Heart right ventricle (tissue), 16 donors: ENCODE measurements at regions of chr12 and their contacts with region 1.

Region 1: GRCh38 chr12:6533923-6534694 is at the start of gene GAPDH:
- DNase-seq: peak; percentile 92 to 93
- ATAC-seq: peak; percentile 71 to 88 (median 84)
- H3K4me3 ChIP-seq: peak within 1 kb of the TSS; percentile 81 to 99 (median 98)
- H3K27ac ChIP-seq: peak within 1 kb of the TSS; percentile 91 to 100 (median 98)
- H3K4me1 ChIP-seq: peaks cover 17 to 62% (median 54%) of the 10 kb centered on the region in 9 donors
- H3K27me3 ChIP-seq: no peaks in the 10 kb centered on the region
- CTCF ChIP-seq: peak in 1 of 9 donors; percentile 9
- total RNA-seq, gene GAPDH: 4,081 to 7,888 (median 4,666) TPM

Region 2: DNA sequence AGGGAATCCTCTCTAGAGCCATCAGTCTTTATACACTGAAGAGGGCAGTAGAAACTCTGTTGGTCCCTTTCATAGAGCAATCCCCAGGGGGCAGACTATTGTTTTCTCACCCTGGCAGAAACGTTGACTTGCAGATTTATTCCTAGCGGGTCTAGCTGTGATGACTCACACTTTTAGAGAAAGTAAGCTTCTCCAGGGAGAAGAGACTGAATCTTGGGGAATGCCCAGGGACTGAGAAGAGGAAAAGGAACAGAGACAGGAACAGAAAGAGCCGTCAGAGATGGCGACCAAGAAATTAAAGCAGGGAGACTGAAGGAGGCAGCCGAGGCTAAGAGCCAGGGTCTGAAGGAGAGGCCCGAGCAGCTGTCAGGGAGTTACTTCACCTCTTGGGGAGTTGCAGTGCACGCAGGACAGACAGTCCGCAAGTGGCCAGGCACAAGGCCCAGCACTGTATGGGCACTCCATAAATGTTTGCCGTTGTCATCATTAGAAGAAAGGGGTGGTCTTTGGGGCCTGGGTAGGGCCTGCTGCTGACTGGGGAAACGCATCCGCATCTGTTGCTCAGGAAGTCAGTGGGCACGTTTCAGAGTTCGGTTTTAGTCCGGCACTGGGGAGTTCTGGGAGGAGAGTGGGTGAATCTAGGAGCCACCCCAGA is 210.6 kb before region 1 on chr12:
- intact Hi-C with region 1: loop called in 1 of 10 experiments (anchors 5 kb)
- DNase-seq: peak in 1 of 2 donors; percentile 85
- ATAC-seq: peak; percentile 41 to 76 (median 64)
- H3K4me3 ChIP-seq: peak overlapping the region in 7 of 10 donors; percentile 3 to 30 (median 25)
- H3K27ac ChIP-seq: peak overlapping the region in 9 of 10 donors; percentile 71 to 88 (median 83)
- H3K4me1 ChIP-seq: peaks cover 20 to 70% (median 65%) of the 10 kb centered on the region in 9 donors
- H3K27me3 ChIP-seq: no peaks in the 10 kb centered on the region
- CTCF ChIP-seq: peak; percentile 6 to 71 (median 54)

Region 3: DNA sequence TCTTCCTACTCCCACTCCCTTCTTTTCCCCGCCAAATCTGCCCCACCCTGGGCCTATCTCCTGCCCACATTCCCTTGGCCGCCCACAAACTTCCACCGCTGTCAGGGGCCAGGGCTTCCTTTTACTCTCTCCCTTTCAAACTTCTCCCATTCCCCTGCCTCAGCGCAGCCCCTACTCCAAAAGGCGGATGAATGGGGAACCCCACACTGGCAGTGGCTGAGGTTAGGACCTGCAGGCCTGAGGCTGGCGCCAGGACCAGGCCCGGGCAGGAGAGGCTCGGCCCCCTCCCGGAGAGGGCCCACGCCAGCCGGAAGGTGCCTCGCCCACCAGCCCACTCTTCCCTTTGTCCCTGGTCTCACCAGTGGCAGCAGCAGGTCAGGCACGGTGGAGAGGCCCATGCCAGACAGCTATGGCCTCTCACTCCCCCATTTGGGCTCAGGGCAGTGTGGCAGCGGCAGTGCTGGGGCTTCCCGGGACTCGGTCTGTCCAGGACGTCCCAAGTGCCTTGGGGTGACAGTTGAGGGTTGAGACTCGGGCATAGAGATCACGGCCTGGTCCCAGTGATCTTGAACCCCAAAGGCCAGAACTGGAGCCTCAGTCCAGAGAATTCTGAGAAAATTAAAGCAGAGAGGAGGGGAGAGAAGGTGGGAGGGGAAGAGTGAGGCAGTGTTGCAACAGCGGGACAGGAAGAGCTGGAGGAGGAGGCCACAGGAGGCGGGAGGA is 192.5 kb before region 1 on chr12 and contains the start of gene TNFRSF1A:
- intact Hi-C with region 1: loop called in 5 of 10 experiments (anchors 5 to 10 kb)
- DNase-seq: peak; percentile 62 to 86
- ATAC-seq: peak; percentile 76 to 87 (median 83)
- H3K4me3 ChIP-seq: peak within 1 kb of the TSS; percentile 68 to 99 (median 92)
- H3K27ac ChIP-seq: peak within 1 kb of the TSS; percentile 91 to 100 (median 98)
- H3K4me1 ChIP-seq: peaks cover 30 to 82% (median 70%) of the 10 kb centered on the region in 9 donors
- H3K27me3 ChIP-seq: no peaks in the 10 kb centered on the region
- CTCF ChIP-seq: no peak
- total RNA-seq, gene TNFRSF1A: 29.4 to 100 (median 39.2) TPM

Region 4: GRCh38 chr12:6451348-6452244 is 82.5 kb before region 1 on chr12 and contains the start of gene TAPBPL:
- intact Hi-C with region 1: loop called in 1 of 10 experiments (anchors 5 kb)
- DNase-seq: peak; percentile 84 to 90
- ATAC-seq: peak; percentile 91 to 96 (median 94)
- H3K4me3 ChIP-seq: peak within 1 kb of the TSS; percentile 56 to 85 (median 68)
- H3K27ac ChIP-seq: peak within 1 kb of the TSS; percentile 92 to 100 (median 98)
- H3K4me1 ChIP-seq: peaks cover 4 to 31% (median 27%) of the 10 kb centered on the region in 9 donors
- H3K27me3 ChIP-seq: no peaks in the 10 kb centered on the region
- CTCF ChIP-seq: no peak
- total RNA-seq, gene TAPBPL: 14.8 to 57.5 (median 17.8) TPM

Region 5: GRCh38 chr12:6493497-6494257 is 40.4 kb before region 1 on chr12 and contains the start of gene NCAPD2:
- intact Hi-C with region 1: loop called in 8 of 10 experiments (anchors 2 to 5 kb)
- DNase-seq: peak; percentile 93 to 94
- ATAC-seq: peak; percentile 95 to 98 (median 96)
- H3K4me3 ChIP-seq: peak within 1 kb of the TSS; percentile 60 to 98 (median 74)
- H3K27ac ChIP-seq: peak within 1 kb of the TSS; percentile 89 to 98 (median 96)
- H3K4me1 ChIP-seq: peaks cover 0 to 30% (median 26%) of the 10 kb centered on the region in 9 donors
- H3K27me3 ChIP-seq: no peaks in the 10 kb centered on the region
- CTCF ChIP-seq: peak in 7 of 9 donors; percentile 27 to 50 (median 35)
- total RNA-seq, gene NCAPD2: 8.4 to 18.8 (median 13.1) TPM